Pancreas (tissue), 10 donors: ENCODE measurements at regions of chr10 and their contacts with region 1.

Region 1: GRCh38 chr10:90787393-90788198 is 70.2 kb downstream of the HTR7 start:
- DNase-seq: peak in 1 of 6 donors; percentile 40
- ATAC-seq: peak in 3 of 4 donors; percentile 75 to 82 (median 77)
- H3K4me3 ChIP-seq: no peak overlapping the region
- H3K27ac ChIP-seq: no peak overlapping the region
- H3K4me1 ChIP-seq: no peaks in the 10 kb centered on the region
- H3K27me3 ChIP-seq: no peaks in the 10 kb centered on the region
- CTCF ChIP-seq: peak; percentile 39 to 67 (median 55)

Region 2: DNA sequence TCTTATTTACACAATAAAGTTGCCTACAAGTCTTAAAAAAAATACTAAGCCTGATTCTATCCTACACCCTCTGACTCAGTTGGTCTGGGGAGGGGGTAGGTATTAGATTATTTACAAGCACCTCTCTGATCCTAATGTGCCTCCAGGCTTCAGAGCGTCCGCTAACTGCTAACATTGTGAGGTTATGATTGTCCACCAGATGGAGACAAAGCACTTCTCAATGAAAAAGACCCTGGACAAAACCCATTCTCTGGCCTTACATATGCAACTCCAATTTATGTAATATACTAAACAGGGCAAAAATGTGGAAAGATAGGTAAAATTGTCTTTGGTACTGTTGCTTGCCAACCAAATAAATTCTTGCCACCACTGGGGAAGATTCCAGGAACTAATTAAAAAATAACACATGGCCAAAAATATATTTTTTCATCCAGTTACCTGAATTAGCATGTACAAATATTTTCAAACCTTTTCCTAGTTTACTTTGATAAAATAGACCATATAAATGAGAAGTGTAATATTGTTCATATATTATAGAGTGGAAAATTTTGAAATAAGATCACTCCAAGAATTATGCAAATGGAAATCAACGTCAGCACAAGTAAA is 993.8 kb before region 1 on chr10:
- intact Hi-C with region 1: loop called in 1 of 3 experiments (anchors 10 kb)
- DNase-seq: peak in 2 of 6 donors; percentile 22 to 42
- ATAC-seq: peak; percentile 66 to 89 (median 88)
- H3K4me3 ChIP-seq: no peak overlapping the region
- H3K27ac ChIP-seq: no peak overlapping the region
- H3K4me1 ChIP-seq: no peaks in the 10 kb centered on the region
- H3K27me3 ChIP-seq: no peaks in the 10 kb centered on the region
- CTCF ChIP-seq: peak; percentile 57 to 65 (median 58)